ENCODE measurements at regions of chr2 and their contacts with region 1.

Region 1: GRCh38 chr2:96320728-96321622 is 4.1 kb upstream of the ITPRIPL1 start:
- DNase-seq: no peak
- ATAC-seq: peak; percentile 37
- H3K4me3 ChIP-seq: peak overlapping the region; percentile 57 to 61
- H3K27ac ChIP-seq: no peak overlapping the region; the same call in 1 of the 2 replicates
- H3K4me1 ChIP-seq: peaks cover 13 to 43% of the 10 kb centered on the region in 2 experiments
- H3K27me3 ChIP-seq: no peaks in the 10 kb centered on the region
- CTCF ChIP-seq: no peak
- POLR2A ChIP-seq: no peak
- RAD21 ChIP-seq: no peak

Region 2: GRCh38 chr2:94986392-94986963 is 1334.5 kb before region 1 on chr2:
- CTCF ChIA-PET with region 1: no interaction called
- POLR2A ChIA-PET with region 1: no interaction called
- RAD21 ChIA-PET with region 1: no interaction called
- intact Hi-C with region 1: no loop called
- DNase-seq: peak; percentile 54
- ATAC-seq: peak; percentile 93
- H3K4me3 ChIP-seq: no peak overlapping the region
- H3K27ac ChIP-seq: no peak overlapping the region
- H3K4me1 ChIP-seq: no peaks in the 10 kb centered on the region
- H3K27me3 ChIP-seq: peaks cover 24% of the 10 kb centered on the region; the same call in 1 of the 2 replicates
- CTCF ChIP-seq: peak; percentile 61 to 79 (median 77); a peak in 5 of 6 replicates
- POLR2A ChIP-seq: no peak
- RAD21 ChIP-seq: peak; percentile 62

Region 3: GRCh38 chr2:96336104-96336775 is 15.3 kb after region 1 on chr2:
- CTCF ChIA-PET with region 1: no interaction called
- POLR2A ChIA-PET with region 1: interaction called, 13 read pairs
- RAD21 ChIA-PET with region 1: interaction called, 4 read pairs
- intact Hi-C with region 1: no loop called
- DNase-seq: no peak
- ATAC-seq: no peak
- H3K4me3 ChIP-seq: peak overlapping the region; percentile 90 to 96
- H3K27ac ChIP-seq: peak overlapping the region; percentile 69
- H3K4me1 ChIP-seq: peaks cover 4 to 45% of the 10 kb centered on the region in 2 experiments; a peak in 3 of 4 replicates
- H3K27me3 ChIP-seq: no peaks in the 10 kb centered on the region
- CTCF ChIP-seq: no peak
- POLR2A ChIP-seq: peak; percentile 67
- RAD21 ChIP-seq: no peak